Dendritic cell treated with granulocyte-macrophage colony-stimulating factor and Interleukin-4, amounts not matched to agents 40 ng/mL and 50 ng/mL, for 4 days (primary cell): ENCODE measurements at regions of chr3 and their contacts with region 1.

Region 1: GRCh38 chr3:129439817-129440617 is at the starts of genes IFT122 and MBD4:
- H3K4me3 Mint-ChIP-seq: peak within 1 kb of the TSS; percentile 84
- H3K27ac Mint-ChIP-seq: peak within 1 kb of the TSS; percentile 92
- H3K4me1 Mint-ChIP-seq: peaks cover 72% of the 10 kb centered on the region
- H3K27me3 Mint-ChIP-seq: no peaks in the 10 kb centered on the region

Region 2: DNA sequence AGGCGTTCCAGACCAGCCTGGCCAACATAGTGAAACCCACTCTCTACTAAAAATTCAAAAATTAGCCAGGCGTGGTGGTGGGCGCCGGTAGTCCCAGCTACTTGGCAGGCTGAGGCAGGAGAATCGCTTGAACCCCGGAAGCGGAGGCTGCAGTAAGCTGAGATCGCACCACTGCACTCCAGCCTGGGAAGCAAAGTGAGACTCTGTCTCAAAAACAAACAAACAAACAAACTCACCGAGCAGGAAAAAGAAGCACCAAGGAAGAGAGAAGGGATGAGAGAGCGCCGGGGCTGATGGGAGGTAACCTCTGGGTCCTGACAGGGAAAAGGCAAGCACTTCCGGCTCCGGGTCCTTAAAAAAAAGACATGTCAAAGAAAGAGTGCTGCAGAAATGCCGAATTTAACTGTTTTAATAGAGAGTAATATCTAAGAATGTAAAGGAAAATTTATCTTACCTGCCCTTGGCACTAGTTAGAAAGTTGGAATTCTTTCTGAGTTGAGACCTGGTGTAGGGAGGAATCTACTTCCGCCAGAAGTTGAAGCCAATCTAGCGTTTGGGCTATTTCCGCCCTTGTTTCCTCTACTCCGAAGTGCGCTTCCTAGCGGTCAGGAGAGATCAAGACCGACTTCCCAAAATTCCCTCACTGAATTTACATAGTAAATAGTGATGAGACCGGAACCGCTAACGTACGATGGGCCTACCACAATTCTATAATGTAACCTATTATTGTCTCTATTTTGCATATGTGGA is 40.7 kb before region 1 on chr3:
- intact Hi-C with region 1: loop called (anchors 1 kb)
- H3K4me3 Mint-ChIP-seq: peak overlapping the region; percentile 100
- H3K27ac Mint-ChIP-seq: peak overlapping the region; percentile 96
- H3K4me1 Mint-ChIP-seq: peaks cover 33% of the 10 kb centered on the region
- H3K27me3 Mint-ChIP-seq: no peaks in the 10 kb centered on the region

Region 3: GRCh38 chr3:129413687-129414506 is 26.1 kb before region 1 on chr3:
- intact Hi-C with region 1: no loop called
- H3K4me3 Mint-ChIP-seq: no peak overlapping the region
- H3K27ac Mint-ChIP-seq: no peak overlapping the region
- H3K4me1 Mint-ChIP-seq: no peaks in the 10 kb centered on the region
- H3K27me3 Mint-ChIP-seq: no peaks in the 10 kb centered on the region

Region 4: GRCh38 chr3:129576514-129577352 is 136.7 kb after region 1 on chr3:
- intact Hi-C with region 1: loop called (anchors 5 kb)
- H3K4me3 Mint-ChIP-seq: peak overlapping the region; percentile 9
- H3K27ac Mint-ChIP-seq: peak overlapping the region; percentile 85
- H3K4me1 Mint-ChIP-seq: peaks cover 51% of the 10 kb centered on the region
- H3K27me3 Mint-ChIP-seq: no peaks in the 10 kb centered on the region